Left lung (tissue), 14 donors: ENCODE measurements at regions of chr7 and their contacts with region 1.

Region 1: DNA sequence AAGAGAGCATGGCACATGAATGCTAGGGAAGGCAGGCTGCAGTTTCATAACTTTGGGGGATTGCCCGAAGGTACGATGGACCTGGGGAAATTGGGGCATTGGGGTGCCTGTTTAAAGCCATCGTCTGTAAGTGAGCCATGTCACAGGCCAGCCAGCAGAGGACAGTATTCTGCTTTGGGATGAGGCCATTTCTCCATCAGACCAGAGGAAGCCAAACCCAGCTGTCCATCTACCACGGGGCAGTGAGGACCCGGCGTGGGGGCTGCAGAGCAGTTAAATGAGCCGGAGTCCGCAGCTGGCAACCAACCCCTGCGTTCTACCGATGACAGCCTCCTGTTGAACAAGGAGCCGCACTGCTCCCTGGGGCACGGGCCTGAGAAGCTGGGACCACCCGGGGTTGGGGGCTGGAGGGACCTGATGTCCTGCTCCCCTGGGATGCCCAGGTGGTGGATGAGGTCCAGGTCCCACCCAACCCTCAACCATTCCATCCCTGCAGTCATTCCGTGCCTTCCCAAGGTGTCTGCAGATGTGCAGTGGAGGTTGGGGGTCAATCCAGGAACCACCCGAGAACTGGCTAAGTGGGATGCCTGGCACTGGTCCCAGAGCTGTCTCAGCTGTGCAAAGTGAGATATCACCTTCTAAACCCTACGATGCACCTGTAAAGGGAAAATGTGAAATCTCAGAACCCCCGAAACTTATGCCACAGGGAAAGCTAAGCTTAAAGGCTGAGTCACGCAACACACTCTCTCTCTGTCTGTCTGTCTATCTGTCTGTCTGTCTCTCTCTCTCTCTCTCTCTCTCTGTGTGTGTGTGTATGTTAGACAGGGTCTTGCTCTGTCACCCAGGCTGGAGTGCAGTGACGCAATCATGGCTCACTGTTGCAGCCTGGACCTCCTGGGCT is 12.1 kb upstream of the RHBDD2 start:
- DNase-seq: peak in 3 of 4 donors; percentile 42 to 75 (median 58)
- ATAC-seq: peak; percentile 95
- H3K4me3 ChIP-seq: no peak overlapping the region
- H3K27ac ChIP-seq: no peak overlapping the region
- H3K4me1 ChIP-seq: peaks cover 0 to 30% of the 10 kb centered on the region in 2 donors
- H3K27me3 ChIP-seq: no peaks in the 10 kb centered on the region
- CTCF ChIP-seq: peak; percentile 80 to 92

Region 2: GRCh38 chr7:76020031-76020714 is 153.4 kb after region 1 on chr7:
- intact Hi-C with region 1: loop called in 1 of 2 experiments (anchors 5 kb)
- DNase-seq: peak; percentile 39 to 92 (median 70)
- ATAC-seq: peak; percentile 90
- H3K4me3 ChIP-seq: no peak overlapping the region
- H3K27ac ChIP-seq: no peak overlapping the region
- H3K4me1 ChIP-seq: peaks cover 0 to 23% of the 10 kb centered on the region in 2 donors
- H3K27me3 ChIP-seq: no peaks in the 10 kb centered on the region
- CTCF ChIP-seq: peak; percentile 81 to 95

Region 3: DNA sequence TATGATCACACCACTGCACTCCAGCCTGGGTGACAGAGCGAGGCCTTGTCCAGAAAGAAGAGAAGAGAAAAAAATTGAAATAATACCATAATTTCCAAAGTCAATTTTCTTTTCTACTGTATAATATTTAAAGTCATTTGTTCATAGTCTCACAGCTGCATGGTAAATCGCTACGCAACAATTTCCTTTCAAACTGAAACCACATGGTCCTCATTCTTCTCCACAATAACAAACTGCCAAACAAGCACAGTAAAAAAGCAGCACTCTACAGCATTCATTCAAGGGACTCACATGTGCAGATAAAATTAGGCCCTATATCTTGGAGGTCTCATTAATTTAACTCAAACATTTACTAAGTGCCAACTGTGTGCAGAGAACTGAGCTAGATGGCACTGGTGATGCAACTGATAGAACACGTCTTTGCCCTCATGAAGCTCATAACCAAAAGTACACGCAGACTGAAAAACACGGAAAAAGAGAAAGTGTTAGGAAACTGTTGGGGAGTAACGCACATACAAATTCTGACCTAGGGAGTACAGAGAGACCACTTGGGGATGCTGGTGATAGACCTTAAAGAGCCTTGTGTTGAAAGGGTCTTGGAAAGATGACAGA is 266.5 kb after region 1 on chr7:
- intact Hi-C with region 1: no loop called
- DNase-seq: no peak
- ATAC-seq: no peak
- H3K4me3 ChIP-seq: no peak overlapping the region
- H3K27ac ChIP-seq: no peak overlapping the region
- H3K4me1 ChIP-seq: no peaks in the 10 kb centered on the region
- H3K27me3 ChIP-seq: no peaks in the 10 kb centered on the region
- CTCF ChIP-seq: no peak